ENCODE measurements at regions of chr7 and their contacts with region 1.

Region 1: GRCh38 chr7:82805527-82805960 is 357.1 kb downstream of the PCLO start:
- DNase-seq: no peak
- H3K4me3 ChIP-seq: no peak overlapping the region
- H3K4me3 Mint-ChIP-seq: no peak overlapping the region
- H3K27ac Mint-ChIP-seq: no peak overlapping the region
- H3K4me1 ChIP-seq: no peaks in the 10 kb centered on the region
- H3K4me1 Mint-ChIP-seq: no peaks in the 10 kb centered on the region
- H3K27me3 ChIP-seq: no peaks in the 10 kb centered on the region
- H3K27me3 Mint-ChIP-seq: no peaks in the 10 kb centered on the region
- CTCF ChIP-seq: no peak

Region 2: DNA sequence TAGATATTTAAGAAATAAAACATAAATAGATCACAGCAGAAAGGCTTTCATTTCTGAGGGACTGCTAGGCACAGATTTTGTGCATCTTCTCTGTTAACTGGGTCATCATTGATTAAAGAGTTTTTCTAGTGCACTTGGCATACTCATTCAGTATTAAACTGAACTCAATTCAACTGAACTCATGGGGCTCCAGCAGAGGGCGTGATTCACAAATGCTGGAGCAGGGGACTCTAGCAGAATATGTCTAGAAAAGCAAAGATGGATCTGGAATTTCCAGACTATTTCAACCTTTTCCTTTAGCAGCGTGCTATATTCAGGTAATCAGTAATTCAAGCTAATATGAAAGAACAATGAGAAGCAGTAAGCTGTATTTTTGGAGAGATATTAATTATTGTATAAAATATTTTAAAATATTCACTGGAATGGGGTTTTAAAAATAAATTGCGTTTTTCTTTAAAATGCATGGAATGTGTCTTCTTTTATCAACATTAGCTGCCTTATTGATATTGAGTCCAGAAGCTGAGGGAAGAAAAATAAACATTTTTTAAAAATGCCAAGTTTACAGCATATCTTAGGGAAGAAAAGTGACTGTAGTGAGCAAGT is 65.2 kb before region 1 on chr7:
- CTCF ChIA-PET with region 1: no interaction called
- POLR2A ChIA-PET with region 1: no interaction called
- intact Hi-C with region 1: loop called (anchors 10 kb)
- DNase-seq: peak; percentile 47 to 53
- H3K4me3 ChIP-seq: no peak overlapping the region
- H3K4me3 Mint-ChIP-seq: no peak overlapping the region
- H3K27ac Mint-ChIP-seq: no peak overlapping the region
- H3K4me1 ChIP-seq: no peaks in the 10 kb centered on the region
- H3K4me1 Mint-ChIP-seq: no peaks in the 10 kb centered on the region
- H3K27me3 ChIP-seq: no peaks in the 10 kb centered on the region
- H3K27me3 Mint-ChIP-seq: peaks cover 5% of the 10 kb centered on the region
- CTCF ChIP-seq: peak; percentile 30 to 55

Region 3: GRCh38 chr7:82755705-82756551 is 49.6 kb before region 1 on chr7:
- CTCF ChIA-PET with region 1: no interaction called
- POLR2A ChIA-PET with region 1: no interaction called
- intact Hi-C with region 1: no loop called
- DNase-seq: no peak
- H3K4me3 ChIP-seq: no peak overlapping the region
- H3K4me3 Mint-ChIP-seq: no peak overlapping the region
- H3K27ac Mint-ChIP-seq: no peak overlapping the region
- H3K4me1 ChIP-seq: no peaks in the 10 kb centered on the region
- H3K4me1 Mint-ChIP-seq: no peaks in the 10 kb centered on the region
- H3K27me3 ChIP-seq: no peaks in the 10 kb centered on the region
- H3K27me3 Mint-ChIP-seq: peaks cover 3% of the 10 kb centered on the region
- CTCF ChIP-seq: no peak

Region 4: GRCh38 chr7:82865856-82866255 is 60.3 kb after region 1 on chr7:
- CTCF ChIA-PET with region 1: no interaction called
- POLR2A ChIA-PET with region 1: no interaction called
- intact Hi-C with region 1: no loop called
- DNase-seq: no peak
- H3K4me3 ChIP-seq: no peak overlapping the region
- H3K4me3 Mint-ChIP-seq: no peak overlapping the region
- H3K27ac Mint-ChIP-seq: no peak overlapping the region
- H3K4me1 ChIP-seq: no peaks in the 10 kb centered on the region
- H3K4me1 Mint-ChIP-seq: no peaks in the 10 kb centered on the region
- H3K27me3 ChIP-seq: no peaks in the 10 kb centered on the region
- H3K27me3 Mint-ChIP-seq: no peaks in the 10 kb centered on the region
- CTCF ChIP-seq: no peak